Calu3 (cell line): ENCODE measurements at regions of chr3 and their contacts with region 1.

Region 1: GRCh38 chr3:169295126-169295525 is 368.4 kb downstream of the MECOM start:
- DNase-seq: peak; percentile 51
- H3K4me3 Mint-ChIP-seq: no peak overlapping the region
- H3K27ac Mint-ChIP-seq: peak overlapping the region; percentile 84
- H3K4me1 Mint-ChIP-seq: peaks cover 72% of the 10 kb centered on the region
- H3K27me3 Mint-ChIP-seq: no peaks in the 10 kb centered on the region
- CTCF ChIP-seq: peak; percentile 72

Region 2: GRCh38 chr3:169218314-169218983 is 76.7 kb before region 1 on chr3:
- CTCF ChIA-PET with region 1: no interaction called
- intact Hi-C with region 1: loop called (anchors 2 kb)
- DNase-seq: peak; percentile 80
- H3K4me3 Mint-ChIP-seq: no peak overlapping the region
- H3K27ac Mint-ChIP-seq: no peak overlapping the region
- H3K4me1 Mint-ChIP-seq: peaks cover 13% of the 10 kb centered on the region
- H3K27me3 Mint-ChIP-seq: no peaks in the 10 kb centered on the region
- CTCF ChIP-seq: peak; percentile 88

Region 3: GRCh38 chr3:169348929-169349613 is 53.9 kb after region 1 on chr3:
- CTCF ChIA-PET with region 1: interaction called, 7 read pairs
- intact Hi-C with region 1: loop called (anchors 2 kb)
- DNase-seq: peak; percentile 60
- H3K4me3 Mint-ChIP-seq: peak overlapping the region; percentile 65
- H3K27ac Mint-ChIP-seq: peak overlapping the region; percentile 96
- H3K4me1 Mint-ChIP-seq: peaks cover 74% of the 10 kb centered on the region
- H3K27me3 Mint-ChIP-seq: no peaks in the 10 kb centered on the region
- CTCF ChIP-seq: no peak

Region 4: GRCh38 chr3:169362301-169362700 is 67.2 kb after region 1 on chr3:
- CTCF ChIA-PET with region 1: interaction called, 4 read pairs
- intact Hi-C with region 1: loop called (anchors 2 kb)
- DNase-seq: peak; percentile 87
- H3K4me3 Mint-ChIP-seq: peak overlapping the region; percentile 46
- H3K27ac Mint-ChIP-seq: peak overlapping the region; percentile 83
- H3K4me1 Mint-ChIP-seq: peaks cover 60% of the 10 kb centered on the region
- H3K27me3 Mint-ChIP-seq: no peaks in the 10 kb centered on the region
- CTCF ChIP-seq: no peak